Heart left ventricle (tissue), 16 donors: ENCODE measurements at regions of chr11 and their contacts with region 1.

Region 1: GRCh38 chr11:118592616-118593367 is 14.6 kb upstream of the PHLDB1 start:
- DNase-seq: peak in 1 of 5 donors; percentile 71
- ATAC-seq: peak; percentile 72 to 87 (median 82)
- H3K4me3 ChIP-seq: no peak overlapping the region
- H3K27ac ChIP-seq: peak overlapping the region; percentile 7 to 82 (median 75)
- H3K4me1 ChIP-seq: peaks cover 0 to 45% (median 21%) of the 10 kb centered on the region in 12 donors
- H3K27me3 ChIP-seq: no peaks in the 10 kb centered on the region
- CTCF ChIP-seq: no peak
- POLR2A ChIP-seq: no peak

Region 2: DNA sequence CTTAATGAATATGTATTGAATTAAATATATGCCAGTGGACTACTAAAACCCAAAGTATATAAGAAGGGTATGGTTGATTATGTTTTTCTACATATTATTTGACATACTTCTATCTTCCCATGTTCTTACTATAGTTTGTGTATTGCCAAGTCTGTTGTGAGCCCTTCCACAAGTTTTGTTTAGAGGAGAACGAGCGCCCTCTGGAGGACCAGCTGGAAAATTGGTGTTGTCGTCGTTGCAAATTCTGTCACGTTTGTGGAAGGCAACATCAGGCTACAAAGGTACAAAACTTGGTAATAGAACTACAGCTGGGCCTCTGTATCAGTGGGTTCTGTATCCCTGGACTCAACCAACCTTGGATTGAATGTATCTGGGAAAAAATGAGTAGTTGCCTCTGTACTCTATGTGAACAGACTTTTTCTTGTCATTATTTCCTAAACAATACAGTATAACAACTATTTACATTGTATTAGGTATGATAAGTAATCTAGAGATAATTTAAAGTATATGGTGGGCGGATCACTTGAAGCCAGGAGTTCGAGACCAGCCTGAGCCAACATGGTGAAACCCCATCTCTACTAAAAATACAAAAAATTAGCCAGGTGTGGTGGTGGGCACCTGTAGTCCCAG is 104.2 kb before region 1 on chr11:
- intact Hi-C with region 1: no loop called
- DNase-seq: peak; percentile 36 to 70 (median 57)
- ATAC-seq: peak in 3 of 4 donors; percentile 42 to 62 (median 58)
- H3K4me3 ChIP-seq: no peak overlapping the region
- H3K27ac ChIP-seq: no peak overlapping the region
- H3K4me1 ChIP-seq: peaks cover 0 to 14% (median 0%) of the 10 kb centered on the region in 12 donors
- H3K27me3 ChIP-seq: no peaks in the 10 kb centered on the region
- CTCF ChIP-seq: peak; percentile 55 to 89 (median 81)
- POLR2A ChIP-seq: no peak

Region 3: DNA sequence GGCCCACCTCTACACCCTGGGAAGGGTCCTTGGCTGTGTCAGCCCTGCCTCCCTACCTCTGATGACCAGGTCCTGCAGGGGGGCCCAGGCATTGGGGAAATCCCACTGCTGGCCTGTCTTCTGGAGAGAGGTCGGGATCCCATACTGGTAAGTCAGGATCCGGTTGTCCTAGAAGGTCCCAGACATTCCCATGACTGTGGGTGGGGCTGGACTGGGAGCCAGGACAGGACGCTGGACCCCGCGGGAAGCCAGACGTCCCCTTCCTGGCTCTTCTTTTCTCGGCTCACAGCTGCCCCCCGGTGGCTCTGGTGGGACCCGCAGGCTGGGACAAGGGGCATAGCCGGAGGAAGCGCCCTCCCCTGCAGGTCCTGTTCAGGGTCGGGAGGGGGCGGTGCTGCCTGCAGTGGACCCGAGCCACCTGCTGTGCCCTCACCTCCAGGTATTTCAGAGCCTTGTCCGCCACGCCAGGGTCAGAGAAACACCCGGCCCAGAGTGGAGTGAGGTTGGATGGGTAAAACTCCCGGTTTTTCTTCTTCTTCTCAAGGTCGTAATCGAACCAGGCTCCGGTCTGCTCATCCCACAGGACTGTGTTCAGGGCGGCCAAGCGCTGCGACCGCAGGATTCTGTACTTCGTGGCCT is 66.6 kb after region 1 on chr11:
- intact Hi-C with region 1: loop called in 2 of 10 experiments (anchors 5 kb)
- DNase-seq: peak; percentile 91 to 94 (median 93)
- ATAC-seq: peak; percentile 73 to 84 (median 78)
- H3K4me3 ChIP-seq: peak overlapping the region in 1 of 12 donors; percentile 7
- H3K27ac ChIP-seq: peak overlapping the region in 11 of 12 donors; percentile 1 to 70 (median 40)
- H3K4me1 ChIP-seq: peaks cover 0 to 26% (median 14%) of the 10 kb centered on the region in 12 donors
- H3K27me3 ChIP-seq: no peaks in the 10 kb centered on the region
- CTCF ChIP-seq: peak; percentile 95 to 100 (median 98)
- POLR2A ChIP-seq: no peak